PC-9 (cell line): ENCODE measurements at regions of chr20 and their contacts with region 1.

Region 1: GRCh38 chr20:22716821-22717351 is 132.5 kb upstream of the FOXA2 start:
- DNase-seq: peak; percentile 57 to 81
- H3K4me3 ChIP-seq: no peak overlapping the region; the same call in 1 of the 2 replicates
- H3K27ac ChIP-seq: peak overlapping the region; percentile 74
- H3K4me1 ChIP-seq: peaks cover 39% of the 10 kb centered on the region
- H3K27me3 ChIP-seq: no peaks in the 10 kb centered on the region
- CTCF ChIP-seq: no peak

Region 2: DNA sequence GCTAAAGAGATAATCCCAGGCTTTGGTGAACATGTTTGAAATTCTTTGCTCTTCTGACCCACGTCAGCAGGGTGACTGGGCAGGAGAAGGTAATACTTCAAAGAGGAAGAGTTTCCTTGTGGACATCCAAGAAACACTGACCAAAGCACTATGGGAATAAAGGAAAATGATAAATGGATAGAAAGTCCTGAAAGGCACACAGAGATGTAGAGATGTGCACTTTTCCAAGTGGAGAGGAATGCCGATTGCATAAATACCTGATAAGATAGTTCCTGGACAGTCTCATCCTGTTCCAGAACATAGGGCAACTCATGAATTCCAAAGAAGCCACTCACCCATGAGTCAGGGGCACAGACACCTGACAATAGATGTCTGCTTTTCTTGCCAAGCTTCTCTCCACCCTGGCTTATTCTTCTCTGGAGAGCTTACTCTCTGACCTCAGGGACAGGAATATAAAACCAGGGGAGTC is 58.8 kb after region 1 on chr20:
- CTCF ChIA-PET with region 1: no interaction called
- POLR2A ChIA-PET with region 1: interaction called, 4 read pairs
- intact Hi-C with region 1: loop called (anchors 5 kb)
- DNase-seq: peak; percentile 69 to 87
- H3K4me3 ChIP-seq: no peak overlapping the region
- H3K27ac ChIP-seq: peak overlapping the region; percentile 81
- H3K4me1 ChIP-seq: peaks cover 42% of the 10 kb centered on the region
- H3K27me3 ChIP-seq: no peaks in the 10 kb centered on the region
- CTCF ChIP-seq: no peak

Region 3: GRCh38 chr20:22921595-22922421 is 204.9 kb after region 1 on chr20:
- CTCF ChIA-PET with region 1: no interaction called
- POLR2A ChIA-PET with region 1: no interaction called
- intact Hi-C with region 1: loop called (anchors 5 kb)
- DNase-seq: peak; percentile 43 to 95
- H3K4me3 ChIP-seq: no peak overlapping the region
- H3K27ac ChIP-seq: peak overlapping the region; percentile 55
- H3K4me1 ChIP-seq: peaks cover 28% of the 10 kb centered on the region
- H3K27me3 ChIP-seq: peaks cover 56% of the 10 kb centered on the region
- CTCF ChIP-seq: no peak